ENCODE measurements at regions of chr4 and their contacts with region 1.

Region 1: DNA sequence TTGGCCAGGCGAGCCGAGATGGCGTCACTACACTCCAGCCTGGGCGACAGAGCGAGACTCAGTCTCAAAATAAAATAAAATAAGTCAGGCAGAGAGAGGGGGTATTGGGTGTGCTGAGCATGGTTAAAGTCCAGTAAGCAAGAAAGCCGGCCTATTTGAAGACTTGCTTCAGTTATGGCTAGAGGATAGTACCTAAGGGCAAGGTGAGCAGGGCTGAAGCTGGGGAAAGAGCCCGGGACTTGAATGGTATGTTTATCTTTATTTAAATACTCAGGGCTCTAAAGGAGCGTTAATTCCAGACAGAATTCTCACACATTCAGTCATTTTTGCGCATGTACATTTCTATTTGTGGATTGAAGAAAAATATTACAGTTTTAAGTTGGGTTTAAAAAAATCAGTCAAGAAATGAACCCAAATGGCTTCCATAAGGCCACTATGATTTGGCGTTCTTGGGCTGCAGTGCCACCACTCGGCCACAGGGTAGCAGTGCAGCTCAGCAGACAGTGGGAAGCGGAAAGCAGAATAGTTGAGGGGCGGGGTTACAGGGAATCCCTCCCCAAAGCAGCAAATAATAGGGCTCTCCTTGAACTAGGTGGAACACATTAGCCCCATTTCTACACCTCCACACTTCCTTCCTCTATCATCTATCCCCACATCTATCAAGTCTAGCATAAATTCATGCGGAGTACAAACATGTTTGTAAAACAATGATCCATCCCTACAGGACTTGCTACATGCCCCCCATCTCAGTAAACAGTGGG is 37.2 kb upstream of the SH3D19 start:
- DNase-seq: peak; percentile 89
- H3K4me3 Mint-ChIP-seq: no peak overlapping the region
- H3K27ac Mint-ChIP-seq: no peak overlapping the region
- H3K4me1 Mint-ChIP-seq: no peaks in the 10 kb centered on the region
- H3K27me3 Mint-ChIP-seq: no peaks in the 10 kb centered on the region
- CTCF ChIP-seq: peak; percentile 93

Region 2: DNA sequence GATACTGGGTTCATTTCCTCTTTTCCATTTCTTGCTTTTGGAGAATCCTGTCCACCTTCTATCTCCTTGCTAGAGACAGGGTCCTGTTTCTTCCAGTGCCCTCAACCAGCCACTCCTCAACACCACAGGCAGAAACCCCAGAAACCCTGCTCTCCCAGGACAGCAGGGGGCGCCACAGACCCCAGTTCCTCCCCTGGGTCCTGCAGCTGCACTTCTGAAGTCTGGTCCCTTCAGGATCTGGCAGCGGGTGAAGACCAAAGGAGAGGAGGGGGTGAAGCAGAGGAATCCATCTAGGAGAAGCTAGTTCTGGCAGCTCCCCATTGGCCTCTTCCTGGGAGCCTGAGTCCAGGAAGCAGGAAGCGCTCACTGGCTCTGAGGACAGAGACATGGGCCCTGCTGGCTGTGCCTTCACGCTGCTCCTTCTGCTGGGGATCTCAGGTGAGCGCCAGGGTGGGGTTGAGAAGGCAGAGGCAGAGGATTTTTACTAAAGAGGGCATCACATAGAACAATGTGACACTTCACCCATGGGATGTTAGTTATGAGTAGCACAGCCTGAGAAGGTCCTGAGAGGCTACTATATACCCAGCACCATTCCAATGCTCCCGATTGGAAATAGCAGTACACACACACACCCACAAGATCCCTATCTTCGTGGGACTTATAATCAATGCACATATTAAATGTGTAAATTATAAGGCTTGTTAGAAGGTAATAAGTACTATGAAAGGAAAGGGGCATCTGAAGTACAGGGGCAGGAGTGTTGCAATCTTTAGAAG is 85.6 kb before region 1 on chr4 and contains the start of gene PRSS48:
- CTCF ChIA-PET with region 1: interaction called, 9 read pairs
- POLR2A ChIA-PET with region 1: no interaction called
- intact Hi-C with region 1: loop called (anchors 1 kb)
- DNase-seq: peak; percentile 70
- H3K4me3 Mint-ChIP-seq: no peak within 1 kb of the TSS
- H3K27ac Mint-ChIP-seq: peak within 1 kb of the TSS; percentile 57
- H3K4me1 Mint-ChIP-seq: no peaks in the 10 kb centered on the region
- H3K27me3 Mint-ChIP-seq: no peaks in the 10 kb centered on the region
- CTCF ChIP-seq: peak; percentile 80
- total RNA-seq, gene PRSS48: not detected in 2 replicates

Region 3: DNA sequence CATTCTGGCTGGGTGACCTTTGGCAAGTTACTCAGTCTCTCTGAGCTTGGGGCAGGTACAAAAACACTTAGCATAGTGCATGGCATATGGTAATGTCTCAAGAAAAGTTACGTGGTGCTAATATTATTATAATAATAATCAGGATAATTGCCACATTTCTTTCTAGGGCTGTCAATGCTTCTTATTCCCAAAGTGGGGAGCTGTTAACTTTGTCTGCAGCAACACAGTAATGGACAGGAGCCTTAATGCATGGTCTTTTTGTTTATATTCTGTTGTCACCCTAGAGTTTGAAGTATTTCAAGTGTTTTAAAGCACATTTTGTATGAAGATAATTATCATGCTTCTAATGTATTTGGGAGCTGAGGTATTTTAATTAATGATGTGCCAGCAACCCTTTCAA is 168.2 kb after region 1 on chr4:
- CTCF ChIA-PET with region 1: no interaction called
- POLR2A ChIA-PET with region 1: interaction called, 3 read pairs
- intact Hi-C with region 1: loop called (anchors 5 kb)
- DNase-seq: peak; percentile 37
- H3K4me3 Mint-ChIP-seq: no peak overlapping the region
- H3K27ac Mint-ChIP-seq: no peak overlapping the region
- H3K4me1 Mint-ChIP-seq: peaks cover 13% of the 10 kb centered on the region
- H3K27me3 Mint-ChIP-seq: no peaks in the 10 kb centered on the region
- CTCF ChIP-seq: peak; percentile 43

Region 4: DNA sequence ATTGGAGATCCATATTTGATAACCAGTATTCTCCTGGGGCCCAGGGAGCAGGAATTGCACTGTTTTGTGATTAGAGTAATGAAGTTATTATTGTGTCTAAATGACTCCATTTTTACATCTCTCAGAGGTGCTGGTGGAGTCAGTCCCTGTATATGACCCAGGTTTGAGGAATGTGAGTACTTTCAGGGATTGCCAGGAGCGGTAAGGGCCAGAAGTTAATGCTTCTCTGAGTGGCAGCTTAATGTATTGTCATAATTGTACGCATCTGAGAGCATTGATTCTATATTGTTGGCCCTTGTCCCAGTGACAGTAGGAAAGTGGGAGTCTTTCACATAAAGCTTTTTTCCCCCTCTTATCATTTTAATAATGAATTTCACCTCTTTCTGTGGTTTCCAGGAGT is 252.0 kb after region 1 on chr4:
- CTCF ChIA-PET with region 1: no interaction called
- POLR2A ChIA-PET with region 1: no interaction called
- intact Hi-C with region 1: loop called (anchors 1 kb)
- DNase-seq: no peak
- H3K4me3 Mint-ChIP-seq: no peak overlapping the region
- H3K27ac Mint-ChIP-seq: no peak overlapping the region
- H3K4me1 Mint-ChIP-seq: no peaks in the 10 kb centered on the region
- H3K27me3 Mint-ChIP-seq: no peaks in the 10 kb centered on the region
- CTCF ChIP-seq: no peak